CD4-positive, alpha-beta T cell (primary cell): ENCODE measurements at regions of chr20 and their contacts with region 1.

Region 1: GRCh38 chr20:51404298-51405060 is 138.0 kb downstream of the NFATC2 start:
- DNase-seq: peak; percentile 69 to 97 (median 82)
- ATAC-seq: peak; percentile 79
- H3K4me3 ChIP-seq: no peak overlapping the region
- H3K4me3 Mint-ChIP-seq: peak overlapping the region; percentile 43
- H3K27ac ChIP-seq: peak overlapping the region; percentile 87 to 90
- H3K27ac Mint-ChIP-seq: peak overlapping the region; percentile 99
- H3K4me1 ChIP-seq: peaks cover 89% of the 10 kb centered on the region
- H3K4me1 Mint-ChIP-seq: peaks cover 64% of the 10 kb centered on the region
- H3K27me3 ChIP-seq: no peaks in the 10 kb centered on the region
- H3K27me3 Mint-ChIP-seq: no peaks in the 10 kb centered on the region
- CTCF ChIP-seq: no peak

Region 2: GRCh38 chr20:51272401-51272800 is 132.1 kb before region 1 on chr20:
- CTCF ChIA-PET with region 1: no interaction called
- POLR2A ChIA-PET with region 1: no interaction called
- intact Hi-C with region 1: no loop called
- DNase-seq: no peak
- ATAC-seq: no peak
- H3K4me3 ChIP-seq: no peak overlapping the region
- H3K4me3 Mint-ChIP-seq: no peak overlapping the region
- H3K27ac ChIP-seq: no peak overlapping the region
- H3K27ac Mint-ChIP-seq: no peak overlapping the region
- H3K4me1 ChIP-seq: no peaks in the 10 kb centered on the region
- H3K4me1 Mint-ChIP-seq: no peaks in the 10 kb centered on the region
- H3K27me3 ChIP-seq: peaks cover 5 to 10% of the 10 kb centered on the region in 2 experiments
- H3K27me3 Mint-ChIP-seq: peaks cover 51% of the 10 kb centered on the region
- CTCF ChIP-seq: no peak

Region 3: GRCh38 chr20:51345601-51346101 is 58.8 kb before region 1 on chr20:
- CTCF ChIA-PET with region 1: no interaction called
- POLR2A ChIA-PET with region 1: no interaction called
- intact Hi-C with region 1: no loop called
- DNase-seq: no peak
- ATAC-seq: no peak
- H3K4me3 ChIP-seq: no peak overlapping the region
- H3K4me3 Mint-ChIP-seq: no peak overlapping the region
- H3K27ac ChIP-seq: no peak overlapping the region
- H3K27ac Mint-ChIP-seq: no peak overlapping the region
- H3K4me1 ChIP-seq: no peaks in the 10 kb centered on the region
- H3K4me1 Mint-ChIP-seq: no peaks in the 10 kb centered on the region
- H3K27me3 ChIP-seq: no peaks in the 10 kb centered on the region
- H3K27me3 Mint-ChIP-seq: no peaks in the 10 kb centered on the region
- CTCF ChIP-seq: no peak

Region 4: GRCh38 chr20:51385646-51386530 is 18.6 kb before region 1 on chr20:
- CTCF ChIA-PET with region 1: interaction called, 15 read pairs
- POLR2A ChIA-PET with region 1: interaction called, 6 read pairs
- intact Hi-C with region 1: no loop called
- DNase-seq: peak in 10 of 14 experiments; percentile 13 to 70 (median 34)
- ATAC-seq: peak; percentile 52
- H3K4me3 ChIP-seq: no peak overlapping the region
- H3K4me3 Mint-ChIP-seq: no peak overlapping the region
- H3K27ac ChIP-seq: no peak overlapping the region
- H3K27ac Mint-ChIP-seq: peak overlapping the region; percentile 34
- H3K4me1 ChIP-seq: peaks cover 35% of the 10 kb centered on the region
- H3K4me1 Mint-ChIP-seq: peaks cover 22% of the 10 kb centered on the region
- H3K27me3 ChIP-seq: no peaks in the 10 kb centered on the region
- H3K27me3 Mint-ChIP-seq: no peaks in the 10 kb centered on the region
- CTCF ChIP-seq: peak; percentile 57

Region 5: DNA sequence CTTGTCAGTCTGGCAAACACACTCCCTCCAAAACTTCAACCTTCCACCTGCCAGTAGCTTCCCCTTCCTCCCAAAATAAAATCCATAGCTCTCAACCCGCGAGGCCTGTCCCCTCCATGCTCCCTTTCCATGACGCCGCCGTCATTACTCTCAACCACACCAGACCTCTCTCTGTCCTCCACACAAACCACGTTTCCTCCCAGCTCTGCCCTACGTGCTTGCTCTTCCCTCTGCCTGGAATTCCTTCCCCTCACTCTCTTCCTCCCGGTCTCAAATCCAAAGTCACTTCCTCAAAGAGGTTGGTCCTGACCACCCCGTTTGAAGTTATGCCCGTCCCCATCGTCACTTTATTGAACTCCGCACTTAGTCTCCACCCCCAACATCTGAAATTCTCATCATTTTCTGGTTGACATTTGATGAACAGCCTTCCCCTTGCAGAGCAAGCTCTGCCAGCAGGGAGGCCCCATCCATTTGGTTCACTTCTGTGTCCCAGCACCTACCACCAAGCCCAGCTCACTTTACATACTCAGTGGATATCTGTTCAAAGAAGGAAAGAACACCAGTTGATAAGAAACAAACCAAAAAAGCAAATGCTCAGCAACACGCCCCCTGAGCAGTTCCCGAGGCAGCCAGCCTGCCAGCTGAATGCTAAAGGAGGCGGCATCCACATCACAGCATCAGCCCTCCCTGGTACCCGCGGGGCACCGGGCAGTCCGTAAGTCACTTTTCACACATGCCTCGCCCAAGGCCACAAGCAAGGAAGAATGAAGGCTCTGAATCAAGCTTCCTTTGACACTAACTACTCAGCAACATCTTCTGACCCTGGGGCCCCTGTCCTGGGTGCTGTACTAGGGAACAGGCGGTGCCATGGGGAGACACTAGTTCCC is 13.0 kb after region 1 on chr20:
- CTCF ChIA-PET with region 1: interaction called, 8 read pairs
- POLR2A ChIA-PET with region 1: interaction called, 13 read pairs
- intact Hi-C with region 1: no loop called
- DNase-seq: peak in 5 of 14 experiments; percentile 11 to 73 (median 59)
- ATAC-seq: peak; percentile 30
- H3K4me3 ChIP-seq: no peak overlapping the region
- H3K4me3 Mint-ChIP-seq: peak overlapping the region; percentile 22
- H3K27ac ChIP-seq: peak overlapping the region; percentile 48 to 85
- H3K27ac Mint-ChIP-seq: peak overlapping the region; percentile 86
- H3K4me1 ChIP-seq: peaks cover 67% of the 10 kb centered on the region
- H3K4me1 Mint-ChIP-seq: peaks cover 57% of the 10 kb centered on the region
- H3K27me3 ChIP-seq: no peaks in the 10 kb centered on the region
- H3K27me3 Mint-ChIP-seq: no peaks in the 10 kb centered on the region
- CTCF ChIP-seq: no peak

Region 6: DNA sequence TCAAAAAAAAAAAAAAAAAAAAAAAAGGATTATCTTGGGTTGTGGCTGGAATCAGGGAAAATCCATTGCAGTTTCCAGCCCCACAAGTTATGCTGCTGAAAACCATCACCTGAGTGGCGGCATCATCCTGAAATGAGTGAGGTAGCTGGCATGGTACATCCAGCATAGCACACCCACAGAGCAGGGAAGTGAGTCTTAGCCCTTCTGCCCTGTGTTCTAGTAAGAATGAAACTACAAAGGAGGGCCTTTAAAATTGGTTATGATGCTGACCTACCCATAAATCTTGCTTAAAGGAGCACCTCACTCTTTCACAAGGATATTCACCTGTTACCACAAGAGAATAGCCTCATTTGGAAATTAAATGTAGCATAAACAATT is 18.8 kb after region 1 on chr20:
- CTCF ChIA-PET with region 1: interaction called, 8 read pairs
- POLR2A ChIA-PET with region 1: interaction called, 6 read pairs
- intact Hi-C with region 1: loop called in 1 of 2 experiments (anchors 2 kb)
- DNase-seq: no peak
- ATAC-seq: no peak
- H3K4me3 ChIP-seq: no peak overlapping the region
- H3K4me3 Mint-ChIP-seq: peak overlapping the region; percentile 4
- H3K27ac ChIP-seq: peak overlapping the region; percentile 32 to 69
- H3K27ac Mint-ChIP-seq: peak overlapping the region; percentile 75
- H3K4me1 ChIP-seq: peaks cover 62% of the 10 kb centered on the region
- H3K4me1 Mint-ChIP-seq: peaks cover 58% of the 10 kb centered on the region
- H3K27me3 ChIP-seq: no peaks in the 10 kb centered on the region
- H3K27me3 Mint-ChIP-seq: no peaks in the 10 kb centered on the region
- CTCF ChIP-seq: no peak

Region 7: GRCh38 chr20:51500311-51500710 is 95.8 kb after region 1 on chr20:
- CTCF ChIA-PET with region 1: interaction called, 5 read pairs
- POLR2A ChIA-PET with region 1: interaction called, 9 read pairs
- intact Hi-C with region 1: loop called in 1 of 2 experiments (anchors 5 kb)
- DNase-seq: peak in 13 of 14 experiments; percentile 22 to 86 (median 52)
- ATAC-seq: peak; percentile 84
- H3K4me3 ChIP-seq: no peak overlapping the region
- H3K4me3 Mint-ChIP-seq: peak overlapping the region; percentile 63
- H3K27ac ChIP-seq: peak overlapping the region; percentile 39 to 60
- H3K27ac Mint-ChIP-seq: peak overlapping the region; percentile 97
- H3K4me1 ChIP-seq: peaks cover 67% of the 10 kb centered on the region
- H3K4me1 Mint-ChIP-seq: peaks cover 91% of the 10 kb centered on the region
- H3K27me3 ChIP-seq: no peaks in the 10 kb centered on the region
- H3K27me3 Mint-ChIP-seq: no peaks in the 10 kb centered on the region
- CTCF ChIP-seq: no peak